ENCODE measurements at regions of chr6 and their contacts with region 1.

Region 1: DNA sequence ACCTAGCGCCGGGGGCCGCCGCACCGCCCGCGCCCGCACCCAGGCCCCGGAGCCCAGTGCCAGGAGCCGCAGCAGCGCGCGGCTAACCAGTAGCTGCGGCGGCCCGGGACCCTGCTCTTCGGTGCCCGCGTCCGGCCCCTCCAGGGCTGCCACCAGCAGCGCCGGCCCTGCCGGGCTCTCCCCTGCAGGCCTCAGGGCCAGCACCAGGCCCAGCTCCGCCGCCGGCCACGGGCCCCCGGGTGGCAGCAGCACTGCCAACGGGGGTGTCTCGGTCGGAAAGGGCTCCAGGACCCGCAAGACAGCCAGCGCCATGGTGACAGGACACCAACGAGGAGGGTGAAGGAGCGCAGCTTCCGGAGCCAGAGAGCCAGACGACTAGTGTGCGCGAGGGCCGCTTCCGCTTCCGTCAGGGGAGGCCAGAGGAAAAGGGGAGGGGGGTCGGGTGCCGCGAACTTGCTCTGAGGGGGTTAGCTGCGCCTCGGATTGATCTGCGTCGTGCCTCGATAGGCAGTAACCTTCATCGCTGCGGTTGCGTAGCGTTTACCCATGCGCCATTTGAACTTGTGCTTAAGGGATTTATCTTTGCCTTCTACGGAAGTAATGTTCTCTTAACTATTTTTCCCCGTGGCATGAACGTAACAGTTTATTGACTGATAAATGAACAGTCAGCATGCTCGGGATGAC is at the start of gene PEX6:
- DNase-seq: peak; percentile 97
- H3K4me3 Mint-ChIP-seq: peak within 1 kb of the TSS; percentile 88
- H3K27ac Mint-ChIP-seq: peak within 1 kb of the TSS; percentile 99
- H3K4me1 Mint-ChIP-seq: peaks cover 51% of the 10 kb centered on the region
- H3K27me3 Mint-ChIP-seq: no peaks in the 10 kb centered on the region
- total RNA-seq, gene PEX6: 27.4 to 29.1 TPM

Region 2: DNA sequence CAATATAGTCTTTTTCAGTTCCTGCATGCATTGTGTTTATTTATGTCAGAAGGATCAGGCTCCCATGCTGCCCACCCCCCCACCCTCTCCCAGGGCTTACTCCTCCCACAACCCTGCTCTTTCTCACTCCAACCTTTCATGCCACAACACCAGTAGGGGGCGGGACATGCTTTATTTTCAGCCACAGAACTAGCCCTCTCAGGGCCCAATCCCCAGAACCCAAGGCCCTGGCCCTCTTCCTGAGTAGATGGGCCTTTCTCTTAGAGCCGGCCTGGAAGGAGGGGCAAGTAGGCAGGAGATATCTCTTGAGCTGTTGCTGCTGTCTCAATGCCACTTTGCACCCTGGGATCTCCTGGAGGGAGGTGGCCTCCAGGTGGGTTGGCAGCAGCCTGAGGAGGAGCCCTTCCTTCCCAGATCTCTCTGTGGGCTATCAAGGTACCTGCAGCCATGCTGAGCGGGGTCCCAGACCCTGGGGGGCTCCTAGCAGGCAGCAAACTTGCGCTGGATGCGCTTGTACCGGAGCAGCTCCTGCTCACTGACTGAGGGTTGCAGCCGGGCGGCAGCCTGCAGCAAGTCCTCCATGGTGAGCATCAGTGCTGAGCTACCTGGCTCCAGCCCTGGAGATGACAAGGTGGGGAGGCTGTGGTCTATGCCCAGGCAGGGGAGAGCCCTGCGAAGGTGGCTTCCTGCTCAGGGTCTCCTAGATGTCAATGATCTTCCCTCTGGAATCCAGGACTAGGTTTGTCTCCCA is 15.0 kb before region 1 on chr6:
- CTCF ChIA-PET with region 1: interaction called, 7 read pairs
- POLR2A ChIA-PET with region 1: interaction called, 10 read pairs
- DNase-seq: peak; percentile 52
- H3K4me3 Mint-ChIP-seq: no peak overlapping the region
- H3K27ac Mint-ChIP-seq: no peak overlapping the region
- H3K4me1 Mint-ChIP-seq: peaks cover 13% of the 10 kb centered on the region
- H3K27me3 Mint-ChIP-seq: peaks cover 3% of the 10 kb centered on the region

Region 3: GRCh38 chr6:43053545-43054205 is 74.7 kb after region 1 on chr6 and contains the start of gene CUL7:
- CTCF ChIA-PET with region 1: no interaction called
- POLR2A ChIA-PET with region 1: interaction called, 12 read pairs
- DNase-seq: peak; percentile 95
- H3K4me3 Mint-ChIP-seq: peak within 1 kb of the TSS; percentile 96
- H3K27ac Mint-ChIP-seq: peak within 1 kb of the TSS; percentile 93
- H3K4me1 Mint-ChIP-seq: peaks cover 54% of the 10 kb centered on the region
- H3K27me3 Mint-ChIP-seq: no peaks in the 10 kb centered on the region
- total RNA-seq, gene CUL7: 12.7 to 13.0 TPM

Region 4: DNA sequence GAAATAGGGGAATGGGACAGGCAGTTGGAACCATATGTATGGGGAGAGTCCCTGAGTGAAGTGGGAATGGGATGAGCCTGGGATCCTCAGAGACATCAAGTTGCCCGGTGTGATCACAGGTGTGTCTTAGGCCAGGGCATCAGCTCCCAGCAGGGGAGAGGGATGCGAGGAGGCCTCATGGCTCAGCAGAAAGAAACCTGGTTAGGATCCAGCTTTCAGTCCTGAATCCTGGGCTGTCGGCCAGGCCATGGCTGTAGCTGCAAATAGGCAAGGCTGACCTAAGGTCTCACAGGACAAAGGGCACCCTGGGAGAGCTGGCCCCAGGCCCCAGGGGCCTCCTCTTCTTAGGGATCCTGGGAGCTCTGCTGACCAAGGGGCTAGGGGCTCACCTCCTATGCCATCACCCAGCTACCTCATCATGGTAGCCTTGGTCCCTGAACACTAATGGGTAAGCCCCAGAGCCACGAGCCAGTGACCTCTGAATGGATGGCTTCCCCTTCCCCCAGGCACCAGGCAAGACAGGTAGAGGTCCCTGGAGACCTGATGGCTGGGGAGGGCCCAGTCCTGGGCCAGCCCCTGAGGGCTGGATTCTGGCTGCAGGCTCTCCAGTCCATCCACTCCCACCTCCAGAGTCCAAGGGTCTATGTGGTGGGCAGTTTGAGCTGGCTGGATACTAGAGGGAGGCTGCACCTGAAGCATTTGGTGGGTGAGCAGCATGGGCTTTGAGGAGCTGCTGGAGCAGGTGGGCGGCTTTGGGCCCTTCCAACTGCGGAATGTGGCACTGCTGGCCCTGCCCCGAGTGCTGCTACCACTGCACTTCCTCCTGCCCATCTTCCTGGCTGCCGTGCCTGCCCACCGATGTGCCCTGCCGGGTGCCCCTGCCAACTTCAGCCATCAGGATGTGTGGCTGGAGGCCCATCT is 318.9 kb after region 1 on chr6 and contains the start of gene SLC22A7:
- CTCF ChIA-PET with region 1: no interaction called
- POLR2A ChIA-PET with region 1: no interaction called
- DNase-seq: no peak
- H3K4me3 Mint-ChIP-seq: no peak within 1 kb of the TSS
- H3K27ac Mint-ChIP-seq: no peak within 1 kb of the TSS
- H3K4me1 Mint-ChIP-seq: peaks cover 3% of the 10 kb centered on the region
- H3K27me3 Mint-ChIP-seq: peaks cover 24% of the 10 kb centered on the region
- total RNA-seq, gene SLC22A7: not detected